ENCODE measurements at regions of chr12 and their contacts with region 1.

Region 1: DNA sequence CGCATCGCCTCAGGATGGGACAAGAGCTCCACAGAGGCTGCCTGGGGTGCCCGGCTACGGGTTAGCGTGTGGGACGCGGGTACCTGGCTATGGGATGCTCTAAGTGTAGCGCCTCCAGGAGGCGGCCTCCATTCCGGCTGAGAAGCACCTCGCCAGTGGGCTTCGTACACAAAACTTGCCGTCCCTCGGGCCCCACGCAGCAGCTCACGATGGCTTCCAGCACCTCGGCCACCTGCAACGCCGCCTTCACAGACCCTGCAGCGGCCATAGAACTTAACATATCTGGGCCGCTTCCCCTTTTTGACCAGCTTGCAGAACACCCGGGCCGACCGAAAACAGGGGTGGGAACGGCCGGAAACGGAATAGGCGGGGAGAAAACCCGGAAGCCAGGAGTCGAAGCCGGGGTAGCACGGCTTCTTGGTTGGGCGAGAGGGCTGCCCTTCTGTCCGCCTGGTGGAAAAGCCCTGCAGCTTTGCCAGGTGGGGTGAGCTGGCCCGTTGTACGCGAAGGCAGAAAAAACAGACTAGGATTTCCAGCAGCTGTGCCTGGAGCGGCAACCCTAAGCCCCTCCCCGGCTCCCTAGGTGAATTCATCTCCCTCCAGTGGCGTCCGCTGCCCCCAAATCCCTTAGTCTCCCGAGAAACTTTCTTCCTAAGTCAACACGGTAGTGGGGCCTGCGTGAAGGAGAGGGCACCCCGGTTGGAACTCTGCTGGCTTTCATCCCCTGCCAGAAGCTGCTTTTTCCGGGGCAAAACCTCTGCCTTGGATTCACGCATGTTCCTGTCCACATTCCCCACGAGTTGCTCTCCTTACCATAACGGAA is at the start of gene BBS10:
- DNase-seq: peak; percentile 80
- H3K4me3 Mint-ChIP-seq: peak within 1 kb of the TSS; percentile 89
- H3K27ac Mint-ChIP-seq: peak within 1 kb of the TSS; percentile 84
- H3K4me1 Mint-ChIP-seq: peaks cover 21% of the 10 kb centered on the region
- H3K27me3 Mint-ChIP-seq: no peaks in the 10 kb centered on the region
- total RNA-seq, gene BBS10: 3.9 and 4.1 TPM in 2 replicates

Region 2: DNA sequence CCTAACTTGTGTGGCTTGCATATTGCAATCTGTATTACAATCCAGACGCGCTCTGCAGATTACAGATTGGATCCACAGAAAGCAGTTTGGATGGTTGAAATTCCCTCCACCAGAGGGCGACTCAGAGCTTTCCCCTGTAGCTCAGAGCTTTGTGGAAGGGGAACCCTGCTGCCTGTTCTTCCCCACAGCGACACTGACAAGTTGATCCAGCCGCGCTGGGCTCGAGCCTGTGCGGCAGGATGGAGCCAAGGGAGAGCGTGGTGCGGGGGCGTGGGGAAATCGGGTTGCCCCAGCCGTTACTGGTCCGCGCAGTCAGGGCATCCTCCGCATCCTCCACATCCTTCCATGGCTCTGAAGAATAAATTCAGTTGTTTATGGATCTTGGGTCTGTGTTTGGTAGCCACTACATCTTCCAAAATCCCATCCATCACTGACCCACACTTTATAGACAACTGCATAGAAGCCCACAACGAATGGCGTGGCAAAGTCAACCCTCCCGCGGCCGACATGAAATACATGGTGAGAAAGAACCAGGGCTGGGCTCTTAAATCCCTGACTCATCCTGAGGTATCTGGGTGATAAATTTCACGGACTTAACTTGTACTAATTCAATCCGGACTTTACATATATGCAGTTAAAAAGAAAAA is 1013.8 kb before region 1 on chr12 and contains the start of gene GLIPR1L1:
- intact Hi-C with region 1: loop called (anchors 5 kb)
- DNase-seq: peak; percentile 68
- H3K4me3 Mint-ChIP-seq: peak within 1 kb of the TSS; percentile 73
- H3K27ac Mint-ChIP-seq: no peak within 1 kb of the TSS
- H3K4me1 Mint-ChIP-seq: peaks cover 23% of the 10 kb centered on the region
- H3K27me3 Mint-ChIP-seq: peaks cover 52% of the 10 kb centered on the region
- total RNA-seq, gene GLIPR1L1: not detected in 2 replicates

Region 3: GRCh38 chr12:75526655-75527511 is 821.4 kb before region 1 on chr12:
- intact Hi-C with region 1: loop called (anchors 1 kb)
- DNase-seq: no peak
- H3K4me3 Mint-ChIP-seq: no peak overlapping the region
- H3K27ac Mint-ChIP-seq: no peak overlapping the region
- H3K4me1 Mint-ChIP-seq: peaks cover 12% of the 10 kb centered on the region
- H3K27me3 Mint-ChIP-seq: peaks cover 42% of the 10 kb centered on the region

Region 4: DNA sequence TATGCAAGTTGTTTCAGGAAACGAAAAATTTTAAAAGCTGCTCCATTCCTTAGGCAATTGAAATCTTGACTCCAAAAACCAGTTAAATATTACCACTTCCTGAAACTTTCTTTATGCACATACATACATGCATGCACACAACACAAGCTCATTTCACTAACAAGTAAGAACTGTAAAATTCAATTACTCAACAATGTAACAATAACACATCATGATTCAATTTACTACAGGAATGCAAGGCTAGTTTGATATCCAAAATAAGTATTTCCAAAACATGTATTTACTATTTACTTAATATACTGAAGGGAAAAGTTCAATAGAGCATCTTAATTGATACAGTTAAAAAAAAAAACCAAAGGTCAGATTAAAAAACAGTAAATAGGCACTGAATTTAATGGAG is 283.4 kb before region 1 on chr12:
- intact Hi-C with region 1: loop called (anchors 5 kb)
- DNase-seq: no peak
- H3K4me3 Mint-ChIP-seq: no peak overlapping the region
- H3K27ac Mint-ChIP-seq: no peak overlapping the region
- H3K4me1 Mint-ChIP-seq: peaks cover 35% of the 10 kb centered on the region
- H3K27me3 Mint-ChIP-seq: no peaks in the 10 kb centered on the region

Region 5: DNA sequence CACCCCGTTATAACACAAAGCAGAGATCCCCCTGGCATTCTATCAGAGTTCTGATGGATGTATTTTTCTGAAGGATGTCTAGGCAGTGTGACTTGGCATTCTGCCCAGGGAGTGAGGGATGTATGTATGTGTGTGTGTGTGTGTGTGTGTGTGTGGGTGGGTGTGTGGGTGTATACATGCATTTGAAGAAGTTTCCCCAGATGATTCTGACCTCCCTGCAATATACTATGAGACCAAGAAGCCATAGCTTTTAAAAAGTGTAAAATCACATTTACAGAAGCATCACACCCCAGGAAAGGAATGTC is 204.1 kb before region 1 on chr12:
- intact Hi-C with region 1: no loop called
- DNase-seq: no peak
- H3K4me3 Mint-ChIP-seq: no peak overlapping the region
- H3K27ac Mint-ChIP-seq: no peak overlapping the region
- H3K4me1 Mint-ChIP-seq: peaks cover 17% of the 10 kb centered on the region
- H3K27me3 Mint-ChIP-seq: peaks cover 15% of the 10 kb centered on the region

Region 6: DNA sequence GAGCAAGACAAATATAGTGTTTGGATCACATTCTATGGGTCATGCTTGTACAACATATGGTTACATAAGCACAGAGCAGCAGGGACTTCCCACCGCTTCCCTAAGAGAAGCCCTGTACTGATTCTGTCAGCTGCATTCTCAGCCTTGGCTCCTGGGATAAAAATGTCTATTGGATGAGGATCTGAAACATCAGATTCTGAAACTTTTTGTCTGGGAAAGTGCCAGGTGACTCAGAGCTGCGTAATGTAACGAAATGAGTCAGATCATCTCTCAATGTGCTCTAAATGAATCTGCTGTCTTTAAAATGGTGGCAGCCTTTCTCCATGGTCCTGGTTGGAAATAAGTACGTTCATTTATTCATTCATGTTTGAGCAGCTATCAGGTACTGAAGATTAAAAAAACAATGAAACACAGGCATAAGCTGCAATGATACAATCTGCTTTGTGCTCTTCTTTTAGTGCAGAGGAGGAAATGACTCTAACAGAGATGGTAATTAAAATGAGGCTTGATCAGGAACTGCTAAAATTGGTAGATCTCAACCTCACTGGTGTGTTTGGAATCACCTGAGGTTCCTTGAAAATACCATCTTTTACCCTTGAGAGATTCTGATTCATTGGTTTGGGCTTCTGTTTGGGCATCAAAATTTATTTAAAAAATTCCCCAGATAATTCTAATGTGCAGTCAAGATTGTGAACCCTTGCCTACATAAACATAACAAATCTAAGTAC is 164.7 kb before region 1 on chr12:
- intact Hi-C with region 1: loop called (anchors 2 kb)
- DNase-seq: peak; percentile 14
- H3K4me3 Mint-ChIP-seq: no peak overlapping the region
- H3K27ac Mint-ChIP-seq: no peak overlapping the region
- H3K4me1 Mint-ChIP-seq: peaks cover 30% of the 10 kb centered on the region
- H3K27me3 Mint-ChIP-seq: peaks cover 37% of the 10 kb centered on the region

Region 7: GRCh38 chr12:76455582-76456345 is 107.5 kb after region 1 on chr12:
- intact Hi-C with region 1: loop called (anchors 1 kb)
- DNase-seq: no peak
- H3K4me3 Mint-ChIP-seq: no peak overlapping the region
- H3K27ac Mint-ChIP-seq: no peak overlapping the region
- H3K4me1 Mint-ChIP-seq: peaks cover 8% of the 10 kb centered on the region
- H3K27me3 Mint-ChIP-seq: no peaks in the 10 kb centered on the region